Right ventricle myocardium superior (tissue), 1 donor: ENCODE measurements at regions of chrX and their contacts with region 1.

Region 1: GRCh38 chrX:134753718-134754008 is 95.4 kb upstream of the PLAC1 start:
- DNase-seq: no peak
- ATAC-seq: peak; percentile 34

Region 2: GRCh38 chrX:134235236-134235635 is 518.4 kb before region 1 on chrX:
- intact Hi-C with region 1: no loop called
- DNase-seq: no peak
- ATAC-seq: no peak

Region 3: DNA sequence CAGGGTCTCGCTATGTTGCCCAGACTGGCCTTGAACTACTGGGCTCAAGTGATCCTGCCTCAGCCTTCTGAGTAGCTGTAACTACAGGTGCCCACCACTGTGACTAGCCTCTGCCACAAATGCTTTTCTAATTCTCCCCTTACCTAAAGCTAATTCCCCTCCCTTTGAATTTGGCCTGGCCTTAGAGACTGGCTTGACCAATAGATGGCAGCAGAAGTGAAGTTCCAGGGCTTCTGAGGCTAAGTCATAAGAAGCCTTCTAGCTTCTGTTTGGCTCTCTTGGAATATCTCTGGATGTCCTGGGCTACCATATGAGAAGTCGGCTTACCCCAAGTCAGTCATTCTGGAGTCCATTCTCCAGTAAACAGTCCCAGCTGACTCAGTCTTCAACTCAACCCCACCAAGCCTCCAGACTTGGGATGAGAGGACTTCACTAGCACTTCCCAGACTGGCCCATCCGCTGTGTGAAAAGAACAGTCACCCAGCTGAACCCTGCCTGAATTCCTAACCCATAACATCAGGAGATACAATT is 232.7 kb before region 1 on chrX:
- intact Hi-C with region 1: loop called (anchors 5 kb)
- DNase-seq: no peak
- ATAC-seq: peak; percentile 77